ENCODE measurements at regions of chr1 and their contacts with region 1.

Region 1: DNA sequence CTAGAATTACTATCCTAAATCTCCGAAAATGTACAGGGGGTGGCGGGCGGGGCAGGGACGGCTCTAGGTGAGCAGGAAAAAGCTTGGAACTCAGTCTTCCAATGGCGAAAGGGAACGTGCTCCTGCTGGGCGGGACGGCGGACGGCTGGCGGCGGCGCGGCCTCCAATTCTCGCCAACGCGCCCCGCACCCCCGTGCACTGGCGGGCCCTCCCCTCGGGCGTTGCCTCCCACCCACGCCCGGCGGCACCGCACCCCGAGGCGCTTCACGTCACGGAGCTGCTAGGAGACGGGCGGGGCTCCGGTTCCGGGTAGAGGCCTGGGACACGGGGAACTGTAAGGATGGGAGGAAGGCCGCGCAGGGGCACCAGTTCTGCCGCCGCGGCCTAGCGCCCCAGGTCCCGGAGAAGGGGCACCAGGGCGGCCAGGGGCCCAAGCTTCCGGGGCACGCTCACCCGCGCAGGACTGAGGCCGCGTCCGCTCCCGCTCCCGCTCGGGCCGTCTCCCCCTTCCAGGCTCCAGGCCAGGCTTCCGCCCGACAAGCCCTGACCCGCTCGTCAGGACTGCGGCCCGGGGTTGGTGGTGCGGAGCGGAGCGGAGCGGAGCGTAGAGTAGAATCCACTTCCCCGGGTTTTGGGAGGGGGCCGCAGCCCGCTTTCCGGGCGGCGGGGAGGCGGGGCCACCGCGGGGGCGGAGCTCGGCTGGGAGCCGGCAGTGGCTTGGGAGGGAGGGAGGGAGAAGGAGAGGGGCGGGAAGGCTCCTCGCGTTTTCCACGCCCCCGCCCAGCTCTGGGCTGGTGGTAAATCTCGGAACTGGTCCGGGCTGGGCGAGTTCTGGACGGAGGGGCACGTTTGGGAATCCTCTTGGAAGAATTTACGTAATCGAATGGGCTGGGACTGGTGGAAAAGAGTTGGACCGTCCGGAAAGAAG is at the start of gene DDX59:
- DNase-seq: peak; percentile 95
- ATAC-seq: peak; percentile 83
- H3K4me3 ChIP-seq: peak within 1 kb of the TSS; percentile 68 to 79
- H3K27ac ChIP-seq: peak within 1 kb of the TSS; percentile 100
- H3K4me1 ChIP-seq: peaks cover 10 to 23% of the 10 kb centered on the region in 2 experiments
- H3K27me3 ChIP-seq: no peaks in the 10 kb centered on the region
- CTCF ChIP-seq: no peak
- POLR2A ChIP-seq: peak; percentile 61
- RAD21 ChIP-seq: no peak
- total RNA-seq, gene DDX59: 16.0 TPM

Region 2: DNA sequence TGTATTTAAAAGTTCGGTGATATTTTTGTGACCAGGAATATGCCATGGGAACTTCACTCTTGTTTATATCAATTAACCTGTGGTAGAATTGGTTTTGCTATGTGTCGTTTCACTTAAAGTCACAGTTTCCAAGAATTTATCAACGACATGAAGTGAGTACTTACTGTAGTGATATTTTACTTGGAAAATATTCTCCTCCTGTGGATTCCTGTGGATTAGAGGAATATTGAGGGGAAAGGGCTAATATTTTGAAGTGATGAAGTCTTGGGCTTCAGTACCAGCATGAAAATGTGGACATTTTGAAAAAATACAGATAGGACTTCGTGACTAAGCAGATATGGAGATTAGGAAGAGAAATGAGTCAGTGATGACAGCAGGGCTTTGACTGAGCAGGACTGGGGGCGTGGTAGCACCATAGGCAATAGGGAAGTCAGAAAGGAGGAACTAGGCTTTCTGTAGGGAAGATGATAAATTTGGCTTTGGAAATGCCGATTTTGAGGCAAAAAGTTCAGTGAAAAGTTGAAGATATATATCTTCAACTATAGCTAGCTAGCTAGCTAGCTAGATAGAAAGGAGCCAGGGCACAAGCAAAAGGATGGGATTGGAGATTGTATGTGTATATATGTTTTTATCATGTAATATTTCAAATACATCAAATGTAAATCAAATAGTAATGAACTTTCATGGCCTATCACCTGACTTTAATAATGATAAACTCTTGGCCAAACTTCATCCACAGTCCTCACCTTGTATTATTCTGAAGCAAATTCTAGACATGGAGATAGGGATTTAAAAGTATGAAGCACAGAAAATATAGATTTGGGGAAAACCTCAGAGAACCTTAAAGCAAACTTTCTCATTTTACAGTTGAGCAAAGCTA is 29.5 kb before region 1 on chr1:
- CTCF ChIA-PET with region 1: no interaction called
- POLR2A ChIA-PET with region 1: interaction called, 14 read pairs
- RAD21 ChIA-PET with region 1: no interaction called
- intact Hi-C with region 1: loop called (anchors 2 kb)
- DNase-seq: peak; percentile 79
- ATAC-seq: peak; percentile 84
- H3K4me3 ChIP-seq: peak overlapping the region in 1 of 2 experiments; percentile 28; a peak in 2 of 4 replicates
- H3K27ac ChIP-seq: peak overlapping the region; percentile 57
- H3K4me1 ChIP-seq: peaks cover 33 to 61% of the 10 kb centered on the region in 2 experiments
- H3K27me3 ChIP-seq: no peaks in the 10 kb centered on the region
- CTCF ChIP-seq: no peak
- POLR2A ChIP-seq: no peak
- RAD21 ChIP-seq: 0 out of 2 replicates have a peak, but pooled peaks have one; percentile 6

Region 3: GRCh38 chr1:200684015-200684414 is 14.4 kb after region 1 on chr1:
- CTCF ChIA-PET with region 1: no interaction called
- POLR2A ChIA-PET with region 1: interaction called, 20 read pairs
- RAD21 ChIA-PET with region 1: no interaction called
- intact Hi-C with region 1: no loop called
- DNase-seq: no peak
- ATAC-seq: no peak
- H3K4me3 ChIP-seq: no peak overlapping the region
- H3K27ac ChIP-seq: no peak overlapping the region
- H3K4me1 ChIP-seq: no peaks in the 10 kb centered on the region
- H3K27me3 ChIP-seq: no peaks in the 10 kb centered on the region
- CTCF ChIP-seq: no peak
- POLR2A ChIP-seq: no peak
- RAD21 ChIP-seq: no peak

Region 4: GRCh38 chr1:200738740-200739498 is 69.3 kb after region 1 on chr1 and contains the start of gene CAMSAP2:
- CTCF ChIA-PET with region 1: no interaction called
- POLR2A ChIA-PET with region 1: interaction called, 15 read pairs
- RAD21 ChIA-PET with region 1: no interaction called
- intact Hi-C with region 1: no loop called
- DNase-seq: peak; percentile 34
- ATAC-seq: peak; percentile 81
- H3K4me3 ChIP-seq: peak within 1 kb of the TSS; percentile 82 to 91
- H3K27ac ChIP-seq: peak within 1 kb of the TSS; percentile 96
- H3K4me1 ChIP-seq: peaks cover 12 to 28% of the 10 kb centered on the region in 2 experiments; a peak in 3 of 4 replicates
- H3K27me3 ChIP-seq: no peaks in the 10 kb centered on the region
- CTCF ChIP-seq: no peak
- POLR2A ChIP-seq: peak; percentile 53
- RAD21 ChIP-seq: no peak
- total RNA-seq, gene CAMSAP2: 25.0 TPM

Measured in HCT116 (cell line).